ENCODE measurements at regions of chr12 and their contacts with region 1.

Region 1: DNA sequence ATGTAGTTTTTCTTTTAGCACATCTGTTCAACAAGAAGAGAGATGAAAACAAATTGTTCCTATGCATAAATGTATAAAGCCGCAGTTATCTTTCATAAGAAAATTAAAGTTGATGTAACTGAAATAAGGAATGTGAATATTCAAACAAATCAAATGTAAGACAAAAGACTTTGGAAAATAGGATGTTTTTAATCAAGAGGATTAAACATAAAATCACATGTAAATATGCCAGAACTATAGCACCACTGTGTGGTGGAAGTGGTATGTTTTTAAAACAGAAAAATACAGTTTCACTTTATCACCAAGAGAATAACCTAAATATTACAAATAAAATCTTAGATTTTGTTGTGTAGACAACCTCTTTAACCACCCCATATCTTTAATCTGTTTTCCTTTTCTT is 40.4 kb downstream of the CAPS2 start:
- DNase-seq: no peak
- H3K4me3 ChIP-seq: no peak overlapping the region
- H3K27ac ChIP-seq: no peak overlapping the region
- H3K4me1 ChIP-seq: peaks cover 0 to 3% (median 0%) of the 10 kb centered on the region in 4 donors
- H3K27me3 ChIP-seq: no peaks in the 10 kb centered on the region
- CTCF ChIP-seq: no peak
- EP300 ChIP-seq: no peak
- POLR2A ChIP-seq: no peak

Region 2: DNA sequence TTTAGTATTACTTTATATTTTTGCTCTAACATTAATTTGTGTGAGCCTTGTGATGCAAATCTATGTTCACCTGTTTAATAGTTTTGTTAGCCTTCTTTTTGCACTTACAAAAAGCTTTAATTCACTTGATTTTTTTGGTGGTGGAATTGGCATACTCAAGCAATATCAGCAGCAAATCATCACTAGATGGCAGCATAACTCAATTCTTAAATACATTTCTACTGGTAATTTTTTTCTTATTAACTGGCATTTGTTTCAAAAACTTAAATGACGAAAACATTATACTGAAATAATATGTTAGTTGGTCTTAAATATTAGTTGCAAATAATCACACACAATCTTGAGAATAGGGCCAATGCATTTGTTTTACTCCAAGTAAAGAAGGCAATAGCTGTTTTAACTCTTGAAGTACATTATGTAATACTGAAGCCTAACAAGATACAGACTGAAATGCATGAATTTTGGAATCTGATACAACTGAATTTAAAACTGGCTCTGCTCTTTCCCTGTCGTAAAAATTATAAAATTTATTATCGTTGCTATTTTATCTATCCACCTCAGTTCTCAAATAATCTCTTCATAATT is 600.6 kb before region 1 on chr12:
- intact Hi-C with region 1: loop called (anchors 10 kb)
- DNase-seq: no peak
- H3K4me3 ChIP-seq: no peak overlapping the region
- H3K27ac ChIP-seq: no peak overlapping the region
- H3K4me1 ChIP-seq: no peaks in the 10 kb centered on the region
- H3K27me3 ChIP-seq: no peaks in the 10 kb centered on the region
- CTCF ChIP-seq: peak in 1 of 4 experiments; percentile 38
- EP300 ChIP-seq: no peak
- POLR2A ChIP-seq: no peak